ENCODE measurements at regions of chr19 and their contacts with region 1.

Region 1: GRCh38 chr19:38634757-38635482 is 12.5 kb upstream of the ACTN4 start:
- DNase-seq: peak; percentile 64 to 87 (median 75)
- ATAC-seq: peak in 3 of 4 donors; percentile 47 to 55 (median 50)
- H3K4me3 ChIP-seq: no peak overlapping the region
- H3K27ac ChIP-seq: peak overlapping the region in 10 of 12 donors; percentile 20 to 52 (median 38)
- H3K4me1 ChIP-seq: peaks cover 0 to 34% (median 23%) of the 10 kb centered on the region in 12 donors
- H3K27me3 ChIP-seq: no peaks in the 10 kb centered on the region
- CTCF ChIP-seq: peak; percentile 91 to 97 (median 95)
- POLR2A ChIP-seq: no peak

Region 2: DNA sequence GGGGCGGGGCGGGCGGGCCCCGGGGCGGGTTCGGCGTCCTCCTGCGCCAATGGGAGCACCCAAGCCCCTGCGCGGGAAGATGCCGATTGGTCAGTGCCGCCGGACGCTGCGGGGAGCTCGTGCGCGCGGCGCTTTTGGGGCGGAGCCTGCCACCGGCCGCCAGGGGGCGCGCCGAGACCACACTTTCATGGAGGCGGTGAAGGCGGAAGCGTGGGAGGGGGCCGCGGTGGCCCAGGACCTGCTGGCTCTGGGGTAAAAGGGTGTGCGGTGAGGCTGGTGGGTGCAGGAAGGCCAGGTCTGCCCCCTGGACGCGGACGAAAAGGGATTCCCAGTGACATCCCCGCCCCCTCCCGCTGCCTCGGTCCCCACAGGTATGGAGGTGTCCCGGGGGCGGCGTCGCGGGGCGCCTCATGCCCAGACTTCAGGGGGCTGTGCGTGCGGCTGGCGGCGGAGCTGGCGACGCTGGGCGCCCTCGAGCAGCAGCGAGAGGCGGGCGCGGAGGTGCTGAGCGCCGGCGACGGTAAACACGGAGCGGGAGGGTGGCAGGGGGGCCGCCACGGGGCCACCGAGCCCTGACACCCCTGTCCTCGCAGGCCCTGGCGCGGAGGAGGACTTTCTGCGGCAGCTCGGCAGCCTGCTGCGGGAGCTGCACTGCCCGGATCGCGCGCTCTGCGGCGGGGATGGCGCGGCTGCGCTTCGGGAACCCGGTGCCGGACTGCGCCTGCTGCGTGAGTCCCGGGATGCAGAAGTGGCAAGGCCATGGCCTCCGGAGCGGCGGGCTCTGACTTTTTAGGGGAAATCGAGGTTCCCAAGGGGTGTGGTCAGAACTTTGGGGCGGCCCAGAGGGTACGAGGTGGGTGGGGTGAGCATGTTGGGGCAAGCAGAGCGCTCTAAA is 231.7 kb before region 1 on chr19 and contains the start of gene FAM98C:
- intact Hi-C with region 1: loop called in 9 of 10 experiments (anchors 1 to 10 kb)
- DNase-seq: peak; percentile 95 to 99 (median 96)
- ATAC-seq: peak; percentile 99 to 100 (median 99)
- H3K4me3 ChIP-seq: peak within 1 kb of the TSS; percentile 70 to 98 (median 90)
- H3K27ac ChIP-seq: peak within 1 kb of the TSS; percentile 52 to 90 (median 79)
- H3K4me1 ChIP-seq: peaks cover 0 to 12% (median 7%) of the 10 kb centered on the region in 12 donors
- H3K27me3 ChIP-seq: peaks cover 5 to 38% (median 20%) of the 10 kb centered on the region in 9 donors
- CTCF ChIP-seq: peak; percentile 94 to 100 (median 99)
- POLR2A ChIP-seq: peak in 1 of 2 donors; percentile 27
- total RNA-seq, gene FAM98C: 9.3 to 15.8 (median 11.9) TPM

Region 3: DNA sequence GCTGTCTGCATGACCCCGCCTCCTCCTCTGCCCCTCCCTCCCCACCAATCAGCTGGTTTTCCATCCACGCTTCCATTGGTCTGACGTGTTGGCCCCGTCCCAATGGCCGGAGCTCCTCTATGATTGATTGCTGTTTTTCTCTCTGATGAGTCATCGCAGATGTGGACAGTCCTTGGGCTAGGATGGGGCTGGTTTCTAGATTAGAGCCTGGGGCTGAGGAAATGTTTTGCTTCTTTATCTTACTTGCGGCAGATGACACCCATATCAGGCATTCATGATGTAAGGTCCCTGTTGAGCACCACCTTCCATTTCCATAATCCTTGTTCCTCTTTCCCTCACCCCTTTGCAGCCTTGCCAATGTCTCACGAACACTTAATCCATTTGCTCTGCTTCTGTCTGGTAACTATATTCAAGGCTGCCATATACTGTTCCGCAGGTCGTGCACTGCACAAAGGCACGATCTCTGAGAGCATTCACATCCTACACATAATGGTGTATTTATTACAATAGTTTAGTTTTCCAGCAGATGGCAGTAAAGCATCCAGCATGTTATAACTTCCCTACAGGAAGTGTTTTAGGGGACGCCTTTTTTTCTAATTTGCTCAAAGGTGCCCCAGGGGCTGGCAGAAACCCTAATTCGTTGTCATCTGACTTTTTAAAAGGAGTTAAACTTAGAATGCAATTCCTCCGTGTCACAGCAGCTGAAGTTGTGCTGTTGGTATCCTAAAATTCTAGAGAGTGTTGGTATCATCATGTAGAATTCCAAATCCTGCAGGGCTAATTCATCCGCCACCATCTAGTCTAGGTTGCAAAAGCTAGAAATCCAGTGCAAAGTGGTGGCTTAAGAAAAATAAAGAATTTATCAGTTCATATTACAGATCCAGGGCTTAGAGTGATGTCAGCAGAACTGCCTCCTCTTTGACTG is 90.6 kb before region 1 on chr19:
- intact Hi-C with region 1: loop called in 3 of 10 experiments (anchors 1 to 5 kb)
- DNase-seq: peak in 4 of 5 donors; percentile 44 to 67 (median 55)
- ATAC-seq: peak; percentile 64 to 84 (median 83)
- H3K4me3 ChIP-seq: peak overlapping the region in 4 of 12 donors; percentile 9 to 44 (median 26)
- H3K27ac ChIP-seq: peak overlapping the region in 1 of 12 donors; percentile 14
- H3K4me1 ChIP-seq: peaks cover 0 to 14% (median 5%) of the 10 kb centered on the region in 12 donors
- H3K27me3 ChIP-seq: no peaks in the 10 kb centered on the region
- CTCF ChIP-seq: peak; percentile 43 to 69 (median 59)
- POLR2A ChIP-seq: no peak

Region 4: GRCh38 chr19:38666663-38667511 is 32.0 kb after region 1 on chr19:
- intact Hi-C with region 1: loop called in 1 of 10 experiments (anchors 1 kb)
- DNase-seq: peak in 4 of 5 donors; percentile 59 to 75 (median 70)
- ATAC-seq: peak in 3 of 4 donors; percentile 29 to 52 (median 48)
- H3K4me3 ChIP-seq: peak overlapping the region in 1 of 12 donors; percentile 19
- H3K27ac ChIP-seq: peak overlapping the region; percentile 88 to 99 (median 96)
- H3K4me1 ChIP-seq: peaks cover 57 to 100% (median 100%) of the 10 kb centered on the region in 12 donors
- H3K27me3 ChIP-seq: no peaks in the 10 kb centered on the region
- CTCF ChIP-seq: no peak
- POLR2A ChIP-seq: no peak

Region 5: GRCh38 chr19:38711726-38712153 is 76.8 kb after region 1 on chr19:
- intact Hi-C with region 1: loop called in 1 of 10 experiments (anchors 5 kb)
- DNase-seq: peak in 4 of 5 donors; percentile 55 to 82 (median 78)
- ATAC-seq: peak; percentile 10 to 69 (median 36)
- H3K4me3 ChIP-seq: no peak overlapping the region
- H3K27ac ChIP-seq: peak overlapping the region; percentile 69 to 98 (median 84)
- H3K4me1 ChIP-seq: peaks cover 49 to 100% (median 84%) of the 10 kb centered on the region in 12 donors
- H3K27me3 ChIP-seq: no peaks in the 10 kb centered on the region
- CTCF ChIP-seq: no peak
- POLR2A ChIP-seq: no peak

Region 6: GRCh38 chr19:39021063-39021462 is 386.1 kb after region 1 on chr19:
- intact Hi-C with region 1: no loop called
- DNase-seq: no peak
- ATAC-seq: no peak
- H3K4me3 ChIP-seq: no peak overlapping the region
- H3K27ac ChIP-seq: no peak overlapping the region
- H3K4me1 ChIP-seq: no peaks in the 10 kb centered on the region
- H3K27me3 ChIP-seq: no peaks in the 10 kb centered on the region
- CTCF ChIP-seq: no peak
- POLR2A ChIP-seq: no peak

Measured in heart left ventricle (tissue), 16 donors.